ENCODE measurements at regions of chr15 and their contacts with region 1.

Region 1: DNA sequence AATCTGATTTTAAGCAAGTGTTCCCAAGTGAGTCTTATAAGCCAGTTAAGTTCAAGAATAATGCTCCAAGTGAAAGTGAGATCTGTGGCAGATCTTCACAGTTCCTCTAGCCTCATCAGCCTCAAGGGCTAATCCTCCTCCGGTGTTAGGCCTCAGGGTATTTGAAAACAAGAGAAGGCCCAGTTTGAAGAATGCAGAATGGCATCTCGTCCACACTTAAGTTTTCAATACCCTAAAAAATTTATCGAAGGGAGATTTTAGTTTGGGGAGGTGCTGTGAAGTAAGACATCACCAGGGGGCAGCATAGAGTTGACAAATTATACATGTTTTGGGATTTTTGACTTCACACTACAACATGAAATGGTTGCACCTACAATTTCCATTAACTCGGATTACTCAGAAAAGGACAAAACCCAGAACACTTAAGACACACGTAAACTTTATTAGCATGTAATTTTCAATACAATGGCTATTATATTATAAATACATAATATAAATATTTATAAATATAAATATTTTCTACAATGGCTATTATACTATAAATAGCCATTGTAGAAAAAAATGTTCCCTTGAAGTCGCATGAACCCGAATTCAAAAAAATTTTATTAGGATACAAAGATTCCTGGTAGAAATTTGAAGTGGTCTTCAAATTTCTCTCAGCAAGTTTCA is 2.3 kb upstream of the TMEM266 start:
- DNase-seq: no peak
- ATAC-seq: peak; percentile 53
- H3K4me3 ChIP-seq: peak overlapping the region; percentile 22; the same call in 1 of the 2 replicates
- H3K27ac ChIP-seq: peak overlapping the region; percentile 63; the same call in 1 of the 2 replicates
- H3K4me1 ChIP-seq: peaks cover 28% of the 10 kb centered on the region
- H3K27me3 ChIP-seq: no peaks in the 10 kb centered on the region
- CTCF ChIP-seq: peak; percentile 60 to 70 (median 68)
- EP300 ChIP-seq: no peak
- POLR2A ChIP-seq: no peak
- RAD21 ChIP-seq: peak; percentile 58

Region 2: DNA sequence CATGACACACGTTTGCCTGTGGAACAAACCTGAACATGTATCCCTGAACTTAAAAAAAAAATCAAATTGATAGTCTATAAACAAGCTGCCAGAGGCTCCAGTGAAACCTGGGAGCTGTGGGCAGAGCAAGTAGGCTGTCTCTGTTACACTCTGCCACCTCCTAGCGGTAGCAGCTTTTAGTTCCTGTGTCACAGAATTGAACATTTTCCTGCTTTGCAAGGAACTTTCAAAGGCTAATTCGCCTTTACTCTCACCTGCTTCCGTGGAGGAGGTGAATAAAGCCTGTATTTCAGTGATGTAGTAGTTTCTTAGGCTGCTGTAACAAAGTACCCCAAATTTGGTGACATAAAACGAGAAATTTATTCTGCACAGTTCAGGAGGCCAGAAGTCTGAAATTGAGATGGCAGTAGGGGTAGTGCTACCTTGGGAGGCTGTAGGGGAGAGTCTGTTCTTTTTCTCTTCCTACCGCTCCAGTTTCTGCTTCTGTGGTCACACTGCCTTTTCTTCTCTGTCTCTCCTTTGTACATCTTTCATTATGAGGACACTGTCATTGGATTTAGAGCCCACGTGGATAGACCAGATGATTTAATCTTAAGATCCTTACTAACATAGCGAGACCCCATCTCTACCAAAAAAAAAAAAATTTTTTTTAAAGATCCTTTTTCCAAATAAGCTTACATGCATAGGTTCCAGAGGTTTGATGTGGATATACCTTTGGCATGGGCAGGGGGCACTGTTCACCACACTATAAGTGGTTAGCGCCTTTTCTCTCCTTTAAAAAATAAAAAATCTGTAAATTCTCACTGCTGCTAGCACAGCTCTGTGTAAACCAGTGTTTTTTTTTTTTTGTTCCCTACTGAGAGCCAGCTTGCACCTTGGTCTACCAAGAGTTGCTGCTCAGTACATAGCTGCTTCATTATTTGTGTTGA is 128.5 kb before region 1 on chr15:
- CTCF ChIA-PET with region 1: interaction called, 25 read pairs
- POLR2A ChIA-PET with region 1: no interaction called
- RAD21 ChIA-PET with region 1: interaction called, 3 read pairs
- SMC1A ChIA-PET with region 1: interaction called, 4 read pairs
- in situ Hi-C with region 1: no loop called
- intact Hi-C with region 1: no loop called
- DNase-seq: no peak
- ATAC-seq: peak; percentile 80
- H3K4me3 ChIP-seq: no peak overlapping the region
- H3K27ac ChIP-seq: no peak overlapping the region
- H3K4me1 ChIP-seq: peaks cover 7% of the 10 kb centered on the region
- H3K27me3 ChIP-seq: no peaks in the 10 kb centered on the region
- CTCF ChIP-seq: peak; percentile 39 to 54 (median 50); a peak in 5 of 6 replicates
- EP300 ChIP-seq: no peak
- POLR2A ChIP-seq: no peak
- RAD21 ChIP-seq: peak; percentile 74

Region 3: DNA sequence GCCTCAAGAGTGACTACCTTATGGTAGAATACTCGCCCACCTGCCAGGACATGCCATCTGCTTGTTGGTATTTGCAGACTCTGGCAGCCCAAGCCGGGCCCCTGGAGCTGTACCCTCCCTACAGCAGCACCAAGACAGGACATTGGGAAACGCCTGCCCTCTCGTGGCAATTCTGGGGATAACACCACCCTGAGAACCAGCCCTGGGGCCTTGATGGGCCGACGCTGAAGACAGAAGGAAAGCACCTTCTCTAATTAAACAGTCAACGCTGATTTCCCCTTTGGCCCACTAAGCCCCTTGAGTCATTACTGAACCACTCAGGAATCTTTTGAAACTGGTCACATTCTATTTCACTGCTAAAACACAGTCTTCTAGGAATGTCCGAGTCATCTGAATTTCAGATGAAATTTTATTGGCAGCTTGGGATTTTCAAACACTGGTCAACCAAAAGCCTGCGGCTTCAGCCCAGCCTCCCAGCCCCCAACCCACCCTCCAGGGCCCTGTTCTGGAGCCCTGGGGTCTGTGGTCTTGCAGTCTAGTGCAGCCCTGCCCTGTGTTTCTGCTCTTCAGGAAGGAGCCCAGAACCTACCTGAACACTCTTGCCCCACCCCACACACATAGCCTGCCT is 93.6 kb after region 1 on chr15:
- CTCF ChIA-PET with region 1: interaction called, 127 read pairs
- POLR2A ChIA-PET with region 1: no interaction called
- RAD21 ChIA-PET with region 1: interaction called, 27 read pairs
- SMC1A ChIA-PET with region 1: interaction called, 21 read pairs
- in situ Hi-C with region 1: no loop called
- intact Hi-C with region 1: no loop called
- DNase-seq: peak; percentile 77
- ATAC-seq: peak; percentile 98
- H3K4me3 ChIP-seq: 0 out of 2 replicates have a peak overlapping the region, but pooled peaks have one; percentile 7
- H3K27ac ChIP-seq: no peak overlapping the region
- H3K4me1 ChIP-seq: peaks cover 20% of the 10 kb centered on the region
- H3K27me3 ChIP-seq: 0 out of 4 replicates have a peak, but pooled peaks cover 0 to 2% of the 10 kb centered on the region in 2 experiments
- CTCF ChIP-seq: peak; percentile 86 to 90 (median 90); a peak in 5 of 6 replicates
- EP300 ChIP-seq: peak in 1 of 2 experiments; percentile 18; a peak in 1 of 4 replicates
- POLR2A ChIP-seq: no peak
- RAD21 ChIP-seq: peak; percentile 66

Region 4: GRCh38 chr15:76376029-76376428 is 318.6 kb after region 1 on chr15:
- CTCF ChIA-PET with region 1: no interaction called
- POLR2A ChIA-PET with region 1: no interaction called
- RAD21 ChIA-PET with region 1: no interaction called
- SMC1A ChIA-PET with region 1: no interaction called
- in situ Hi-C with region 1: no loop called
- intact Hi-C with region 1: no loop called
- DNase-seq: no peak
- ATAC-seq: no peak
- H3K4me3 ChIP-seq: no peak overlapping the region
- H3K27ac ChIP-seq: no peak overlapping the region
- H3K4me1 ChIP-seq: no peaks in the 10 kb centered on the region
- H3K27me3 ChIP-seq: no peaks in the 10 kb centered on the region
- CTCF ChIP-seq: no peak
- EP300 ChIP-seq: no peak
- POLR2A ChIP-seq: no peak
- RAD21 ChIP-seq: no peak